ENCODE measurements at regions of chr3 and their contacts with region 1.

Region 1: GRCh38 chr3:33113772-33114621 is at the start of gene CRTAP:
- DNase-seq: peak; percentile 87
- H3K4me3 ChIP-seq: peak within 1 kb of the TSS; percentile 80
- H3K27ac ChIP-seq: peak within 1 kb of the TSS; percentile 88
- H3K27me3 ChIP-seq: no peaks in the 10 kb centered on the region
- CTCF ChIP-seq: no peak
- polyA plus RNA-seq, gene CRTAP: 314 and 338 TPM in 2 replicates

Region 2: DNA sequence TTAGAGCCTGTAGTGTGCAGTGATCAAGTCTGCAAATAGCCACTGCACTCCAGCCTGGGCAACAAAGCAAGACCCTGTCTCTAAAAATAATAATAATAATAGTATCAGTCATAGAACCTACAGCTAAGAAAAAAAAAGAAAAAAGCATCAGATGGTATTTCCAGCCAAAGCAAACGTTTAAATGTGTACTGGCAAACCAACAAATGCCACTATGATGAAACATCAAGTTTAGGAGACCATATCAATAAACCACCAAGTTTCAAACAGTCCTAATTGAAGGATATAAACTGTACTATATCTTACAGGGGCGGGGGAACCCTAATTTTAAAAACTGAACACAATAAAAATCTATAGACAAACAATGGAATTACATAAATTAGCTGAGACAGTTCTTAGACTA is 319.8 kb after region 1 on chr3:
- CTCF ChIA-PET with region 1: no interaction called
- POLR2A ChIA-PET with region 1: interaction called, 10 read pairs
- DNase-seq: no peak
- H3K4me3 ChIP-seq: no peak overlapping the region
- H3K27ac ChIP-seq: no peak overlapping the region
- H3K27me3 ChIP-seq: no peaks in the 10 kb centered on the region
- CTCF ChIP-seq: no peak